Pancreas (tissue), 10 donors: ENCODE measurements at regions of chr10 and their contacts with region 1.

Region 1: DNA sequence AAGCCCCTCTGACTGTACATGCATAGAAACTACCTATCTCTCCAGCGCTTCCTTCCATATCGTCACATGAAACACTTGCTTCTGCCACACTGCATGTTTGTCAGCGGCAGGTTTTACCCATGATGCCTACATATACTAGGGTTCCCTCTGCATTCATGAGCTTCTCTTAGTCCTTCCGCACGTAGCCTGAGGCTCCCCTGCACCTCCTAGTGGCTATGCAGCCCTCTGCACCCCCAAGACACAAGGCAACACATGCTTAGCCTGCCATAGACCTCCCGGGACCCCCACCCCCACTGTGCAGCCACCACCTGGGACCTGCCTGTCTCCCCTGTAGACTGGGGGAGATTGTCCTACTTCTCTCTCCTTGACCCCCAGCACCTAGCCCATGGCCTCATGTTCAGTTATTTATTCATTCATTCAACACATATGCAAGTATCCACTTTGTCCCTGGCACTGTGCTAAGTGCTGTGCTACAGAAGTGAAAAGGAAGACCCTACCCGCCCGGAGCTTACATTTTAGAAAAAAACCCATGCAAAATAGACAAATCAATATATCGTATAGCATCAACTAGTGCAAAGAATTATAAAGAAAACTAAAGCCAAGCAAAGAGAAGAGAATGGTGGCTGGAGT is 23.5 kb downstream of the TMEM273 start:
- DNase-seq: peak in 3 of 6 donors; percentile 13 to 35 (median 24)
- ATAC-seq: peak in 3 of 4 donors; percentile 74 to 84 (median 83)
- H3K4me3 ChIP-seq: no peak overlapping the region
- H3K27ac ChIP-seq: no peak overlapping the region
- H3K4me1 ChIP-seq: no peaks in the 10 kb centered on the region
- H3K27me3 ChIP-seq: no peaks in the 10 kb centered on the region
- CTCF ChIP-seq: peak; percentile 13 to 45 (median 28)

Region 2: DNA sequence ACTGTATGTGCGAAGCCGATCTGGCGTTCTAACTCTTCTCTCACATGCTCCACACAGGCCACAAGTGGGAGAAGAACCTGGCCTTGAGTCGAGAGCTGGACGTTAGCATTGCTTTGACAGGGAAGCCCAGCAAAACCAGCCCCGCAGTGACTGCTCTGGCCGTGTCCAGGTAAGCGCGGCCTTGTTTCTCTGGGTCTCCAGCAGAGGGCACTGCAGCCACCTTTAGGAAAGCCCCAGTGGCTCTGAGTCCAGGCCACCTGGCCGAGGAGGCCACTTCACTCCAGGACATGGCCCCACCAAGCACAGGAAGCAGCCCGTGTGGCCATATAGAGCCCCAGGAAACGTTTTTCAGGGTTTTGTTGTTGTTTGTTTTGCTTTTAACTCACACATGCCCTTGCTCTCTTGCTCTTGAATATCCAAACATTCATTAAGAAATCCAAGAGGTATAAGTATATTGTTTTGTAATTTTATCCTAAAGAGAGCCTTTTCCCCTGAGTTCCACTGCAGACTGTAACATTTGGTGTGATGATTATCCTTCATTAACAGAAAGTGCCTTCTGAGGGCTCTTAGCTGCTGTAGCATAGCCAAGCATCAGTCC is 183.3 kb before region 1 on chr10:
- intact Hi-C with region 1: loop called in 2 of 3 experiments (anchors 10 kb)
- DNase-seq: peak; percentile 16 to 80 (median 52)
- ATAC-seq: peak; percentile 83 to 97 (median 90)
- H3K4me3 ChIP-seq: no peak overlapping the region
- H3K27ac ChIP-seq: no peak overlapping the region
- H3K4me1 ChIP-seq: no peaks in the 10 kb centered on the region
- H3K27me3 ChIP-seq: no peaks in the 10 kb centered on the region
- CTCF ChIP-seq: peak; percentile 69 to 85 (median 73)